GM12878 (cell line): ENCODE measurements at regions of chr6 and their contacts with region 1.

Region 1: DNA sequence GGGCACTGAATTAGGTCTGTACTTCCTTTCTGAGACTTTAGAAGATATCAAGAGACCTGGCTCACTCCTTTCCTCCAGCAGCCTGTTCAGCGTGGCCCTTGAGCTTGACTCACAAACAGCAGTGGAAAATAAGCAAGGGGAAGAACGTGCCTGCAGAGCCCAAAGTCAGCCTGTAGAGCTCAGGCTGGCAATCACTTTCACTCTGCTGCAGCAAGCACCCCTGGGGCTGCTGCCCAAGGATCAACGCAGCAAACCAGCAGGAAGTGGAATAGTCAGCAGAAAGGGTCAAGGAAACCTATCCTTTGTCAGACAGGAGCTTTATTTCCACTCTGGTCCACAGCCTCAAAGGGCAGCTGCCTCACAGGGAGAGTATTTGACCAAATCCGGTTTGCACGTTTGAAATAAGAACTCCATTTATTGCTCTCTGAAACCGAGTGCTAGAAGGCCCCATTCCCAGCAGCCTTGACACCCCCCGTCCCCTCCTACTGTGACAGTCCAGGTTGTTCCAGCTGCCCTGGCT is 77.4 kb downstream of the PRDM1 start:
- DNase-seq: peak; percentile 69
- ATAC-seq: peak; percentile 52
- H3K4me3 ChIP-seq: peak overlapping the region; percentile 13; the same call in 1 of the 2 replicates
- H3K27ac ChIP-seq: peak overlapping the region; percentile 97
- H3K4me1 ChIP-seq: peaks cover 64% of the 10 kb centered on the region
- H3K27me3 ChIP-seq: no peaks in the 10 kb centered on the region
- CTCF ChIP-seq: peak in 2 of 3 experiments; percentile 22 to 23; a peak in 2 of 6 replicates
- EP300 ChIP-seq: no peak
- POLR2A ChIP-seq: no peak
- RAD21 ChIP-seq: no peak

Region 2: GRCh38 chr6:106097411-106098231 is 65.9 kb before region 1 on chr6:
- CTCF ChIA-PET with region 1: interaction called, 6 read pairs
- POLR2A ChIA-PET with region 1: interaction called, 5 read pairs
- RAD21 ChIA-PET with region 1: interaction called, 6 read pairs
- SMC1A ChIA-PET with region 1: interaction called, 19 read pairs
- in situ Hi-C with region 1: loop called (anchors 10 kb)
- intact Hi-C with region 1: loop called (anchors 1 kb)
- DNase-seq: peak; percentile 78
- ATAC-seq: peak; percentile 68
- H3K4me3 ChIP-seq: peak overlapping the region; percentile 72
- H3K27ac ChIP-seq: peak overlapping the region; percentile 80
- H3K4me1 ChIP-seq: peaks cover 34% of the 10 kb centered on the region
- H3K27me3 ChIP-seq: no peaks in the 10 kb centered on the region
- CTCF ChIP-seq: no peak
- EP300 ChIP-seq: peak; percentile 65 to 68
- POLR2A ChIP-seq: no peak
- RAD21 ChIP-seq: no peak

Region 3: GRCh38 chr6:106114492-106115265 is 48.8 kb before region 1 on chr6:
- CTCF ChIA-PET with region 1: interaction called, 3 read pairs
- POLR2A ChIA-PET with region 1: no interaction called
- RAD21 ChIA-PET with region 1: interaction called, 5 read pairs
- SMC1A ChIA-PET with region 1: interaction called, 11 read pairs
- in situ Hi-C with region 1: loop called (anchors 10 kb)
- intact Hi-C with region 1: loop called (anchors 1 kb)
- DNase-seq: peak; percentile 62
- ATAC-seq: peak; percentile 92
- H3K4me3 ChIP-seq: 0 out of 2 replicates have a peak overlapping the region, but pooled peaks have one; percentile 2
- H3K27ac ChIP-seq: peak overlapping the region; percentile 63
- H3K4me1 ChIP-seq: peaks cover 44% of the 10 kb centered on the region
- H3K27me3 ChIP-seq: peaks cover 0 to 2% of the 10 kb centered on the region in 2 experiments; a peak in 1 of 4 replicates
- CTCF ChIP-seq: no peak; a peak in 1 of 6 replicates
- EP300 ChIP-seq: peak in 1 of 2 experiments; percentile 52; a peak in 1 of 4 replicates
- POLR2A ChIP-seq: no peak
- RAD21 ChIP-seq: no peak

Region 4: DNA sequence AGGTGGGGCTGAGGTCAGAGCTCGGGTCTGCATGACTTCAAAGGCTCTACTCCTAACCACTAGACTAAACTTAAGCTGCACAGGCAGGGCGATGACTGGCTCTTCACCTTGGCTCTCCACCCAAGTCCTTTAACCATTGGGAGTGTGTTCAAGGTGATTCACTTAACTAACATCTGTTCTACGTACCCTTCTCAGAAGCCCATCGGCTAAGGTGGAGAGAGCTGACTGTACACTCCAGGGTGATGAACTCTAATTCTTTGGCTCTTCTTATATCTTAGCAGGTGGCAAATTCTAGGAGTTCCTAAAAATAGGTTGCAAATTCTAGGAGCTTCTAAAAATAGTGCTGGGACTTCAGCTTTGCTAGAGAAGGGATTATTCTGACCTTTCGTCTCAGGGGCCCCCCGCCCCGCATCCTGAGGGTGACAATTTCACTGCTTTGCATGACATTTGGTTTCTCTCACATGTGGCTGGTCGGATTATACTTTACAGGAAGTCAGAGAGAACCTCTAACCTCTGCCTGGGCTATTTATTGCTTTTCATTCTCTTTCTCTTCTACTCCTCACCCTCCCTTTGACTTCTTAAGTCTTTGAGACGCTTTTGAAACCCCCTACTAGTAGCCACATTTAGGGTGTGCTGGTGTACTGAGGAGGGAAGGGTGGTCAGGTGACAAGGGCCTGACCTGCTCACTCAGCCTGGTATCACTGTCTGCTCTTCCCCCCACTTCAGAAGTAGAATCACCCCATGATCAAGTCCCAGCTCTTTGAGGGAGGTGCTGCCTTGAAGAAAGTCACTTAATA is 21.9 kb before region 1 on chr6:
- CTCF ChIA-PET with region 1: interaction called, 27 read pairs
- POLR2A ChIA-PET with region 1: interaction called, 28 read pairs
- RAD21 ChIA-PET with region 1: interaction called, 90 read pairs
- SMC1A ChIA-PET with region 1: interaction called, 217 read pairs
- in situ Hi-C with region 1: no loop called
- intact Hi-C with region 1: loop called (anchors 1 kb)
- DNase-seq: peak; percentile 85
- ATAC-seq: peak; percentile 76
- H3K4me3 ChIP-seq: no peak overlapping the region
- H3K27ac ChIP-seq: peak overlapping the region; percentile 91
- H3K4me1 ChIP-seq: peaks cover 63% of the 10 kb centered on the region
- H3K27me3 ChIP-seq: no peaks in the 10 kb centered on the region
- CTCF ChIP-seq: no peak
- EP300 ChIP-seq: peak in 1 of 2 experiments; percentile 77; a peak in 2 of 4 replicates
- POLR2A ChIP-seq: no peak
- RAD21 ChIP-seq: peak; percentile 46

Region 5: GRCh38 chr6:106187424-106187982 is 24.0 kb after region 1 on chr6:
- CTCF ChIA-PET with region 1: interaction called, 85 read pairs
- POLR2A ChIA-PET with region 1: interaction called, 9 read pairs
- RAD21 ChIA-PET with region 1: interaction called, 88 read pairs
- SMC1A ChIA-PET with region 1: interaction called, 148 read pairs
- in situ Hi-C with region 1: no loop called
- intact Hi-C with region 1: loop called (anchors 1 kb)
- DNase-seq: no peak
- ATAC-seq: peak; percentile 28; the same call in 1 of the 3 replicates
- H3K4me3 ChIP-seq: no peak overlapping the region
- H3K27ac ChIP-seq: peak overlapping the region; percentile 56; the same call in 1 of the 2 replicates
- H3K4me1 ChIP-seq: peaks cover 28% of the 10 kb centered on the region
- H3K27me3 ChIP-seq: no peaks in the 10 kb centered on the region
- CTCF ChIP-seq: no peak
- EP300 ChIP-seq: no peak
- POLR2A ChIP-seq: no peak
- RAD21 ChIP-seq: no peak